Heart right ventricle (tissue), 16 donors: ENCODE measurements at regions of chr4 and their contacts with region 1.

Region 1: DNA sequence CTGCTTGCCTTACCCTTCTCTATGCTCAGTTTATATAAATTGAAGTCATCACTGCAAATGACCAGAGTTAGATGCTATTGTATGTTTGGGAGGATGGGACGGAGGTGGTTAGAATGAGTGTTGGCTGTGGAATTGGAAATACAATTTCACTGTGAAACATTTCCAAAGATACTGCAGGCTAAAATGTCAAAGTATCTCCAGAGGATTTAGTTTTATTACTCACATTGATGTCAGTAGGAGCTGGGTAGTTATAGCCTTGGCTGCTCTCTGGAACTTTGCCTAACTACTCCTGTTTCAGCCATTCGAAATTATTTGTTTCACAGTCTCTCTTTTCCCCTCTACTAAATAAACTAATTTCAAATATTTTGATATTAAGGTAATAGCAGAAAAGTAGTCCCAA is 92.6 kb upstream of the PPP3CA start:
- DNase-seq: no peak
- ATAC-seq: peak in 1 of 8 donors; percentile 67
- H3K4me3 ChIP-seq: no peak overlapping the region
- H3K27ac ChIP-seq: no peak overlapping the region
- H3K4me1 ChIP-seq: no peaks in the 10 kb centered on the region
- H3K27me3 ChIP-seq: no peaks in the 10 kb centered on the region
- CTCF ChIP-seq: no peak

Region 2: DNA sequence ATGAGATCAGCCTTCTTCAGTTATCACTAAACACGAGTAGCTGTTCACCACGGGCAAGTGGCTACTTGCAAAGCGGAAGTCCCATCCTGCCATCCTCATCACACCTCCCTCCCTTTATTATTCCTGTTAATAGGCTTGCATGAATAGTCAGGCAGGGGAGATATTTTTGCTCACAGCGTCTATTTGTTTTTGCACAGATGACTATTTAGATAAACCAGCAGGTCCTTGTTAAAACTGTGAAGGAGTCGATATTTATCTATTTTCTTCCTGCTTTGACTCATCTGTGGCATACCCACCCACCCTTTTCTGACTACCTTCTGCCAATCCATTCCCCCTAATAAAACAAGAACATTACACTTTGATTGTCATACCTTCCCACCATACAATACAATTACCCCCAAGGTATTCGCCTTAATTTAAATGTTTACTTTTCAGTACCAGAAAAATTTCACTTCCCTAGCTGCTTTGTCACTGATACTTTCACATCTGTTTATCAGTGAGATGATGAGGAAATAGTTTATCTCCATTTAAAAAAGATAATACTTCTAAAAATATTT is 254.0 kb after region 1 on chr4:
- intact Hi-C with region 1: loop called in 1 of 10 experiments (anchors 10 kb)
- DNase-seq: no peak
- ATAC-seq: no peak
- H3K4me3 ChIP-seq: no peak overlapping the region
- H3K27ac ChIP-seq: no peak overlapping the region
- H3K4me1 ChIP-seq: no peaks in the 10 kb centered on the region
- H3K27me3 ChIP-seq: no peaks in the 10 kb centered on the region
- CTCF ChIP-seq: no peak